Caco-2 (cell line): ENCODE measurements at regions of chrX and their contacts with region 1.

Region 1: GRCh38 chrX:118156254-118156952 is 39.8 kb upstream of the KLHL13 start:
- DNase-seq: peak; percentile 37 to 39
- H3K4me3 ChIP-seq: no peak overlapping the region
- H3K4me3 Mint-ChIP-seq: peak overlapping the region; percentile 22
- H3K27ac Mint-ChIP-seq: peak overlapping the region; percentile 84
- H3K4me1 ChIP-seq: peaks cover 19% of the 10 kb centered on the region
- H3K4me1 Mint-ChIP-seq: peaks cover 14% of the 10 kb centered on the region
- H3K27me3 ChIP-seq: no peaks in the 10 kb centered on the region
- H3K27me3 Mint-ChIP-seq: no peaks in the 10 kb centered on the region
- CTCF ChIP-seq: no peak

Region 2: DNA sequence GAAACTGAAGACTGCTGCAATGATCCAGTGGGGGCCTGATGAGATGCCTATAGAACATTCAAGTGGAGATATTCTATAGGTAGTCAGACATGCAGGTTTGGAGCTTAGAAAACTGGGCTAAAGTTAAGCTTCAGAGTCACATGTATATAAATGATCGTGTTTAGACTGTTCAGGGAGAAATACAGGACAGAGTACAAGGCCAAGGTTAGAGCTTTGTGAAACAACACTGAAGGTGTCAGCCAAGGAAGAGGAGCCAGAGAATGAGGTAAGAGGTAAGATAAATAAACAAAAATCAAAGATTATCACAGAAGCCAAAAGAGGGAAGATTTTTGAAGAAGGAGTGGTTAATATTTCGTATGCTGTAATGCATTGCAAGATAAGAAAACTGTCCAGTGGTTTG is 18.1 kb after region 1 on chrX:
- CTCF ChIA-PET with region 1: no interaction called
- POLR2A ChIA-PET with region 1: no interaction called
- intact Hi-C with region 1: loop called (anchors 2 kb)
- DNase-seq: no peak
- H3K4me3 ChIP-seq: no peak overlapping the region
- H3K4me3 Mint-ChIP-seq: no peak overlapping the region
- H3K27ac Mint-ChIP-seq: no peak overlapping the region
- H3K4me1 ChIP-seq: peaks cover 12% of the 10 kb centered on the region
- H3K4me1 Mint-ChIP-seq: peaks cover 17% of the 10 kb centered on the region
- H3K27me3 ChIP-seq: no peaks in the 10 kb centered on the region
- H3K27me3 Mint-ChIP-seq: no peaks in the 10 kb centered on the region
- CTCF ChIP-seq: no peak